Activated T-helper 2 cell treated with anti-CD3 and anti-CD28 coated beads, Interferon-gamma antibody, Interleukin-2, Interleukin-4, amounts not matched to agents 10 μg/mL and 5 μg/mL and 100 μg/mL, durations not matched to agents 14 hours and 24 hours and 36 hours (primary cell): ENCODE measurements at regions of chr1 and their contacts with region 1.

Region 1: DNA sequence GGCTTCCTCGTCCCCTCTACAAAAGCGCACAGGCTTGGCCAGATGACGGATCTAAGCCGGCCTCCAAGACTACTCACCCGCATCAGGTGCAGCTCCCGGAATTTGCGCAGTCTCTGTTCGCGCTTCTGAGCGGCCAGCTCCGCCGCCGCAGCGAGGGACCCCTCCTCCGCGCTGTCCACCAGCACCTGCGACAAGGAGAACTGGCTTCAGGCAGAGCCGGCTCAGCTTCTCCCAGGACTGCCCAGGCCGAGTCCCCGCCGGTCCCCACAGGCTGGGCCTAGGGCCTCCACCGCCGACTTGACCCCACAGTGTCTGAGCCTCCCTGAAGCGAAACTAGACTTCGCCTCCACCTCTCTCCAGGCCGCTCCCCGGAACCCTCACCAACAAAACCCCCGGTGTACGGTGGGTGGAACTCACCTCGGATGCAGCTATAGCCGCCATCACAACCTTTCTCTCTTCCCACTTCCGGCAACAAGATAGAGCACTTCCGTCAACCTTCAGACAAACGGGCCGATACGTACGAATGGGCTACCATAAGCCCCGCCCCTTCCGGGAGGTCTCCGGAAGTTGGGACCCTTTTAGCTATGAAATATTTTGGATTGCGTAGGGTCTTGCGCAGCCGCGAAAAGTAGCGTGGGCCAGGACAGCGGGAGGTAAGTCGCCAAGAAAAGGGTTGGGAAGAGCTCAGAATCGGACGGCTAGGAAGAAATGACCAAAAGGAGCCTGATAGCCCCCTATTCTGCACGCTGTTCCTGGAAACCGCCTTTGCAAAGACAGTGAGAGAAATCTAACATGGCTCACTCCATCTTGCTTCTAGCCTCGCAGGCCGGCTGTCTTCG is at the start of gene SYF2:
- DNase-seq: peak; percentile 86
- H3K4me3 Mint-ChIP-seq: no peak within 1 kb of the TSS
- H3K27ac Mint-ChIP-seq: no peak within 1 kb of the TSS
- H3K4me1 Mint-ChIP-seq: peaks cover 27% of the 10 kb centered on the region
- H3K27me3 Mint-ChIP-seq: no peaks in the 10 kb centered on the region
- total RNA-seq, gene SYF2: 40.1 and 42.3 TPM in 2 replicates

Region 2: GRCh38 chr1:24930204-24931145 is 301.8 kb before region 1 on chr1 and contains the start of gene RUNX3:
- intact Hi-C with region 1: loop called (anchors 2 kb)
- DNase-seq: peak; percentile 88
- H3K4me3 Mint-ChIP-seq: peak within 1 kb of the TSS; percentile 93
- H3K27ac Mint-ChIP-seq: peak within 1 kb of the TSS; percentile 67
- H3K4me1 Mint-ChIP-seq: peaks cover 61% of the 10 kb centered on the region
- H3K27me3 Mint-ChIP-seq: no peaks in the 10 kb centered on the region
- total RNA-seq, gene RUNX3: 129 and 135 TPM in 2 replicates

Region 3: GRCh38 chr1:25247024-25247828 is 15.0 kb after region 1 on chr1 and contains the start of gene RSRP1:
- intact Hi-C with region 1: loop called (anchors 1 kb)
- DNase-seq: peak; percentile 100
- H3K4me3 Mint-ChIP-seq: peak within 1 kb of the TSS; percentile 98
- H3K27ac Mint-ChIP-seq: peak within 1 kb of the TSS; percentile 98
- H3K4me1 Mint-ChIP-seq: peaks cover 40% of the 10 kb centered on the region
- H3K27me3 Mint-ChIP-seq: peaks cover 2% of the 10 kb centered on the region
- total RNA-seq, gene RSRP1: 140 and 144 TPM in 2 replicates